Activated B cell treated with CpG ODN at 0.5 μM for 24 hours (primary cell): ENCODE measurements at regions of chr17 and their contacts with region 1.

Region 1: GRCh38 chr17:8630802-8631553 is 453 bp upstream of the MYH10 start:
- DNase-seq: peak; percentile 78
- ATAC-seq: peak; percentile 97
- H3K4me3 Mint-ChIP-seq: peak overlapping the region; percentile 97
- H3K27ac Mint-ChIP-seq: no peak overlapping the region
- H3K4me1 Mint-ChIP-seq: peaks cover 19% of the 10 kb centered on the region
- H3K27me3 Mint-ChIP-seq: peaks cover 37% of the 10 kb centered on the region
- CTCF ChIP-seq: no peak

Region 2: GRCh38 chr17:8692913-8693727 is 62.1 kb after region 1 on chr17:
- CTCF ChIA-PET with region 1: no interaction called
- POLR2A ChIA-PET with region 1: no interaction called
- intact Hi-C with region 1: no loop called
- DNase-seq: no peak
- ATAC-seq: no peak
- H3K4me3 Mint-ChIP-seq: no peak overlapping the region
- H3K27ac Mint-ChIP-seq: no peak overlapping the region
- H3K4me1 Mint-ChIP-seq: no peaks in the 10 kb centered on the region
- H3K27me3 Mint-ChIP-seq: peaks cover 33% of the 10 kb centered on the region
- CTCF ChIP-seq: no peak

Region 3: DNA sequence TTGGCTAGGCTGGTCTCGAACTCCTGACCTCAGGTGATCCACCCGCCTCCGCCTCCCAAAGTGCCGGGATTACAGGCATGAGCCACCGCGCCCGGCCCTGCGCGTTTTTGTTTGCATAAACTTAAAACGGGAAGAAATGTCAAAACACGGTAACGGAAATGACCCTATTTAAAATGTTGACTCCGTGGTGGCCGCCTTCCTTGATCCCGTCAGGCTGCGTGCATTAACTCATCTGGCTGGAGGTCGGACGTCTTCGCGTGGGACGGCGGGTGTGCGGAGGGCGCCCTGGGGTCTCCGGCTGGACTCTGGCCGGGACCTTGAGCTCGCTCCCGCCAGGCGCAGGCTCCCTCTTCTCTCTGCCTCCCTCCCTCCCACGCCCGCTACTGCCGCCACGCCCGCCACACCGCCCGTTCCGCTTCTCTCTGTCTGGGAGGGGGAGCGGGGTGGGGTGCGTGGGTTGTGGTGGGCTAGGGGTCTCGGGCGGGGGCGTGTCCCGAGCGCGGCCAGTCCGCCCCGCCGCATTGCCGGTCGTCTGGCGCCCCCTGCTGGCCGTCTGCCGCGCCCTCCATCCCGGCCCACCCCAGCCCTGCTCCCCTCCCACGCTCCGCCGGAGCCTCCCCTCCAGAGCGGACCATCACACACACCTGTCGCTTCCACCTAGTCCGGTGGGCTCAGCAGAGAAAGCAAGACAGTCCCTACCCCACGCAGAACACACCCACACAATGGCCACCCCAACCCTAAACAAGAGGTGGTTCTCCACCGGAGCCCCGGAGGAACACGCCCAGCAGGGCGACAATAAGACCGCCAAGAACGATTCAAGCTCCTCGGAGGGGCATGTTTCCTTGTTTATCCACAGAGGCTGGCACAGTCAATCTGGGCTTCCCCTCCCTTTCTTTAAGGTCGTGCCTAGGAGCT is 114.9 kb after region 1 on chr17:
- CTCF ChIA-PET with region 1: no interaction called
- POLR2A ChIA-PET with region 1: no interaction called
- intact Hi-C with region 1: loop called (anchors 2 kb)
- DNase-seq: peak; percentile 84
- ATAC-seq: peak; percentile 81
- H3K4me3 Mint-ChIP-seq: peak overlapping the region; percentile 85
- H3K27ac Mint-ChIP-seq: peak overlapping the region; percentile 77
- H3K4me1 Mint-ChIP-seq: peaks cover 10% of the 10 kb centered on the region
- H3K27me3 Mint-ChIP-seq: no peaks in the 10 kb centered on the region
- CTCF ChIP-seq: peak; percentile 96

Region 4: GRCh38 chr17:8820311-8821010 is 189.5 kb after region 1 on chr17:
- CTCF ChIA-PET with region 1: no interaction called
- POLR2A ChIA-PET with region 1: no interaction called
- intact Hi-C with region 1: no loop called
- DNase-seq: no peak
- ATAC-seq: no peak
- H3K4me3 Mint-ChIP-seq: no peak overlapping the region
- H3K27ac Mint-ChIP-seq: no peak overlapping the region
- H3K4me1 Mint-ChIP-seq: no peaks in the 10 kb centered on the region
- H3K27me3 Mint-ChIP-seq: peaks cover 5% of the 10 kb centered on the region
- CTCF ChIP-seq: no peak

Region 5: DNA sequence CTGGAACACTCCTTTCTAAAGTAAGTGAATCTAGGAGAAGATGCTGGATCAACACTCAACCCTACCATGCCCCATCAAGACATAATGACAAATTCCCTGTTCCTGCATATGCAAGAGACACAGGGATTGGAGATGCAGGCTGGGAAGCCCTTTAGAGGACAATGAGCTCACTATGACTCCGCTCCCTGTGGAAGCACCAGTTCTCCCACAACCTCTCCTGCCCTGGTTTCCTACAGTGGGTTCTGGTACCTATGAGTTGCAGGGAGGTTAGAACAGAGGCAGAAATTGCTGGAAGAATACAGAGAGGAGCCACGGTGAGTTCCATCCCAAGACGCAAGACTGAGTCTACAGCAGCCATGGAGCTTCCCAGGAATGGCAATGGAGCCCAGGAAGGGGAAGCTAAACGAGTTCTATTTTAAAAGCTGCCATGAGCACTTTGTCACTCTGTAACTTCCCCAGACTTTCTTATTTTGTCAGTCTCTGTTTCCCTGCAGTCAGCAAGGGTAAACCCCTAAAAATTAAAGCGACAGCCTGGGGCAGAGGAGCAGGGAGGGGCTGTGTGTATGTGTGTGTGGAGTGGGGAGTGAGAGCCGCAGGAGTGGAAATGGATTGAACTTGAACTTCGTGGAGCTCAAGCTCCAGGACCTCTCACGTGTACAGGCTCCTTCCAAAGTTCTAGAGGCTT is 278.8 kb after region 1 on chr17:
- CTCF ChIA-PET with region 1: no interaction called
- POLR2A ChIA-PET with region 1: no interaction called
- intact Hi-C with region 1: loop called (anchors 5 kb)
- DNase-seq: no peak
- ATAC-seq: no peak
- H3K4me3 Mint-ChIP-seq: peak overlapping the region; percentile 13
- H3K27ac Mint-ChIP-seq: peak overlapping the region; percentile 31
- H3K4me1 Mint-ChIP-seq: peaks cover 46% of the 10 kb centered on the region
- H3K27me3 Mint-ChIP-seq: no peaks in the 10 kb centered on the region
- CTCF ChIP-seq: no peak

Region 6: DNA sequence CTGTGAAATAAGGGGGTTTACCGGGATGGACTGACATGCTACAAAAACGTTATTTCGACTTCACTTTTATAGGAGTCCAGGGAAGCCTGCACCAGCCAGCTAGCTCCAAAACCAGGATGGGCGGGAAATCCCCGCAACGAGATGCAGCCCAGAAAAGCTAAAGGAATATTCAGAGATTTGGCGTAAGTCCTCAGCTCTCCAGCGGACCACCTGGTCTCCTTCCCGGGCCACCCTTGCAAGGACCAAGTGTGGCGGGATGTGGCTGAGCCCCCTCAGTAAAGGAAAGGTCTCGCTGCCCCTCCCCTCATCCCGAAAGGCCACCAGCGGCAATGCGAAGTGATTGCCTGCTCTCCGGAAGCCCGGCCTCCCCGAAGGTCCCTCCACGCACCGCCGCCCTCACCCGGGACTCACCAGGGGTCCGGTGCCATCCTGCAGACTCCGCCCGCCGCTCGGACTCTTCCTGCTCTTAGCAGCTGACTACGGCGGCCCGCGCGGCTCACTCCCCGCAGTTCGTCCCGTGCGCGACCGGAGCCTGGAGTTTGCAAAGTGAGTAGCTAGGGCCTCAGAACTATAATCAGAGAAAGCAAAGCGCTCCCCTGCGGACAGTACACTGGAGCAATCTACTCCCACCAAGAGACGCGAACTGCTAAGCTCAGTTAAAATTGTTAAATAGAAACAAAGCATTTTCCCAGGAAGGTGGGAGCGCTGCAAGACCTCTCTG is 944.6 kb after region 1 on chr17 and contains the start of gene STX8:
- CTCF ChIA-PET with region 1: no interaction called
- POLR2A ChIA-PET with region 1: no interaction called
- intact Hi-C with region 1: loop called (anchors 5 kb)
- DNase-seq: peak; percentile 80
- ATAC-seq: peak; percentile 84
- H3K4me3 Mint-ChIP-seq: peak within 1 kb of the TSS; percentile 99
- H3K27ac Mint-ChIP-seq: peak within 1 kb of the TSS; percentile 87
- H3K4me1 Mint-ChIP-seq: peaks cover 29% of the 10 kb centered on the region
- H3K27me3 Mint-ChIP-seq: no peaks in the 10 kb centered on the region
- CTCF ChIP-seq: no peak
- total RNA-seq, gene STX8: 66.9 and 71.7 TPM in 2 replicates